ENCODE measurements at regions of chr1 and their contacts with region 1.

Region 1: DNA sequence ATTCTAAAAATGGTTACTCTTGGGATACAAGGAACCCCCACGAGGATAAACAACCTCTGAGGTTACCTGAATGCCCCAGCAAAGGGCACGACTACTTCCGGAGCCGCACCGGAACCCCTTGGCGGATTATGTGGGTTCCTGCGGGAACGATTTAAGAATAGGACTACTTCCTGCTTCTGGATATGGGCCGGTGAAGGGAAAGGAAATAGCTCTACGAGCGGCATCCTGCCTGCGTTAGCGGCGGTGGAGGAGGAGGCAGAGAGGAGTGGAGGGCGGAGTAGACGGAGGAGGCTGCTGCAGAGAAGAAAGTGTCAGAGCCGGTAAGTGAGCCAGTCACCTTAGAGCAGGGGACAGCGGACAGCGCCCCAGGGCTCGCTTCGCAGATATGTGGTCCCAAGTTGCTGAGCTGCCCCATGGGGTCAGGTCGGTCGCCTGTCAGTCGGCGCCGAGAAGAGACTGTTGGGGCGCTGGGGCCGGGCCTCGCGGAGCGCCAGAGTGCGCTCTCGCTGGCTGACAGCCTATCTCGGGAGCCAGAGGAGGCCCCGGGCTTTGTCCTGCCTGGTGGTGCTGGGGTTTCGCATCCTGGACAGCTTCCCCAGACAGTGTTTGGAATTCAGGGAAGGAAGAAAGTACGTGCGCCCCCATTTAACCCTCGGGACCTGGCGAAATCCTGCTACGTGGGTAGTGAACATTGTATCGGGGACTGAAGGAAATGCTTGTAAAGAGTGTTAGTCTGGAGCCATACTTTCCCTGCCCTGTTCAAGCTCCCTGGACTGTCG is at the start of gene KLHL20:
- DNase-seq: peak; percentile 72 to 95 (median 82)
- ATAC-seq: peak; percentile 97
- H3K4me3 ChIP-seq: peak within 1 kb of the TSS; percentile 80
- H3K27ac ChIP-seq: peak within 1 kb of the TSS; percentile 82
- H3K4me1 ChIP-seq: no peaks in the 10 kb centered on the region; a peak in 2 of 5 replicates
- H3K27me3 ChIP-seq: no peaks in the 10 kb centered on the region
- CTCF ChIP-seq: peak in 2 of 3 experiments; percentile 14 to 29; a peak in 1 of 6 replicates
- EP300 ChIP-seq: peak; percentile 64
- POLR2A ChIP-seq: peak; percentile 98
- RAD21 ChIP-seq: peak; percentile 20 to 54; a peak in 3 of 4 replicates
- polyA plus RNA-seq, gene KLHL20: 8.9 to 10.3 TPM

Region 2: DNA sequence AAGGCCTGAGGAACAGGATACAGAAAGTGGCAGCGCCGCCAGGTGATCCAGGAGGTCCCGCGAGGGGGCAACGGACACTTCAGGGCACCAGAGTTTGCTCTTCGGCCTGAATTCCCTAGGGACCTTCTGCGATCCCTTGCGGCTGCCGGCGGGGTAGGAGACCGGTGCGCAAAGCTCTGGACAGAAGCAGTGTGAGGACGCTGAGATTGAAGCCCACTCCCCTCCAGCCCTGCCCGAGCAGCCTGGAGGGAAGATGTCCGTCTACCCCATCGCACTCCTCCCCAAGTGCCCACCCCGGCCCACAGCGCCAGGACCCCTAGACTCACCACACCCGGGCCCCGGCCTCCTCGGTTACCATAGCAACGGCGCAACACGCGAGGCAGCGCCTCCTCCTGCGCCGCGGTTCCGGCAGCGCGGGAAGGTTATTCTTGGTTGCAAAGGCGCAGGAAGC is 45.4 kb before region 1 on chr1 and contains the start of gene ANKRD45:
- CTCF ChIA-PET with region 1: no interaction called
- POLR2A ChIA-PET with region 1: interaction called, 3 read pairs
- in situ Hi-C with region 1: no loop called
- intact Hi-C with region 1: loop called (anchors 1 kb)
- DNase-seq: no peak
- ATAC-seq: no peak
- H3K4me3 ChIP-seq: no peak within 1 kb of the TSS
- H3K27ac ChIP-seq: peak within 1 kb of the TSS; percentile 76
- H3K4me1 ChIP-seq: peaks cover 16 to 19% of the 10 kb centered on the region in 2 experiments
- H3K27me3 ChIP-seq: no peaks in the 10 kb centered on the region
- CTCF ChIP-seq: no peak
- EP300 ChIP-seq: no peak
- POLR2A ChIP-seq: no peak
- RAD21 ChIP-seq: no peak
- polyA plus RNA-seq, gene ANKRD45: 0.10 to 0.29 TPM

Region 3: DNA sequence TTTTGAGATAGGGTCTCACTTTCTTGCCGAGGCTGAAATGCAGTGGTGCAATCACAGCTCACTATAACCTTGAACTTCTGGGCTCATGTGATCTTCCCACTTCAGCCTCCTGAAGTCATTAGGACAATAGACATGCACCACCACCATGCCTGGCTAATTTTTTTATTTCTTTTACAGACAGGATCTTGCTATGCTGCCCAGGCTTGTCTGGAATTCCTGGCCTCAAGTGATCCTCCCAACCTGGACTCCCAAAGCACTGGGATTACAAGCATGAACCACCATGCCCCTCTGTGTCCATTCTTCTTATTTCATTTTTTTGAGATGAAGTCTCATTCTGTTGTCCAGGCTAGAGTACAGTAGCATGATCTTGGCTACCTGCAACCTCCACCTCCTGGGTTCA is 12.2 kb before region 1 on chr1:
- CTCF ChIA-PET with region 1: no interaction called
- POLR2A ChIA-PET with region 1: interaction called, 15 read pairs
- in situ Hi-C with region 1: no loop called
- intact Hi-C with region 1: no loop called
- DNase-seq: no peak
- ATAC-seq: no peak
- H3K4me3 ChIP-seq: no peak overlapping the region
- H3K27ac ChIP-seq: no peak overlapping the region
- H3K4me1 ChIP-seq: no peaks in the 10 kb centered on the region
- H3K27me3 ChIP-seq: no peaks in the 10 kb centered on the region
- CTCF ChIP-seq: no peak
- EP300 ChIP-seq: no peak
- POLR2A ChIP-seq: no peak
- RAD21 ChIP-seq: no peak